ENCODE measurements at regions of chr12 and their contacts with region 1.

Region 1: DNA sequence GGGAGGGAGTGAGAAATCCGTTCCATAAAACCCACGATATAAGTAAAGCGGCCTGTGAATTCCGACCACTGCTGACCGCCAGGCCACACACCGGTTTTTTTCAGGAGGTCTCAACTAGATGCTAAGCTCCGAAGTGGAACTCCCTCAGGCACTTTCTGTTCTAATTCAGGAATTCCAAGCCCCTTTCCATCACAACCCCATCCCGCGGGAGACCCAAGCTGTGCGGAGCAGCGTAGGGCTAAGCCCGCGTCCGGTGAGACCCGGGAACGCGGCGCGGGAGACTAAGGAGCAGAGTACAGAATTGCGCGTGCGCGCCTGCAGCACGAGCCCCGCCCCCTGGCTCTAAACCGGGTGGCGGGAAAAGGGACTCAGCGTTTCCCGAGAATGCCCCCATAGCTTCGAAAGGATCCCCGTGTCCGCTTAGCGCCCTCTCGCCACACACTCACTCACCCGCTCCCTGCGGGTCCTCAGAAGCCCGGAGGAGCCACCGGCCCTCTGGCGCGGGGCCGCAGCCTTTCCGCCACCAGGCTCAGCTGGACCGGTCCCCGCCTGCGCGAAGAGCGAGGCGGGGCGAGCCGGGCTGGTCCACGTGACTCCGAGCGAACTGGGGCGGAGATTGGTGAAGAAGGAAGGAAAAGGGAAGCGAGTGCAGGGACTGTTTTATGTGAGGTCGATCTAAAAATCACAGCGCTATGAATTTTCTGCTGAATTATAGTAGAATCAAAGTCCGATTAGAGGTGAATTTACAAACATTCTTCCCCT is at the start of gene TIMELESS:
- DNase-seq: peak; percentile 91
- ATAC-seq: peak; percentile 99
- H3K4me3 Mint-ChIP-seq: peak within 1 kb of the TSS; percentile 87
- H3K27ac Mint-ChIP-seq: peak within 1 kb of the TSS; percentile 82
- H3K4me1 Mint-ChIP-seq: peaks cover 31% of the 10 kb centered on the region
- H3K27me3 Mint-ChIP-seq: no peaks in the 10 kb centered on the region
- total RNA-seq, gene TIMELESS: 64.1 to 65.8 TPM

Region 2: DNA sequence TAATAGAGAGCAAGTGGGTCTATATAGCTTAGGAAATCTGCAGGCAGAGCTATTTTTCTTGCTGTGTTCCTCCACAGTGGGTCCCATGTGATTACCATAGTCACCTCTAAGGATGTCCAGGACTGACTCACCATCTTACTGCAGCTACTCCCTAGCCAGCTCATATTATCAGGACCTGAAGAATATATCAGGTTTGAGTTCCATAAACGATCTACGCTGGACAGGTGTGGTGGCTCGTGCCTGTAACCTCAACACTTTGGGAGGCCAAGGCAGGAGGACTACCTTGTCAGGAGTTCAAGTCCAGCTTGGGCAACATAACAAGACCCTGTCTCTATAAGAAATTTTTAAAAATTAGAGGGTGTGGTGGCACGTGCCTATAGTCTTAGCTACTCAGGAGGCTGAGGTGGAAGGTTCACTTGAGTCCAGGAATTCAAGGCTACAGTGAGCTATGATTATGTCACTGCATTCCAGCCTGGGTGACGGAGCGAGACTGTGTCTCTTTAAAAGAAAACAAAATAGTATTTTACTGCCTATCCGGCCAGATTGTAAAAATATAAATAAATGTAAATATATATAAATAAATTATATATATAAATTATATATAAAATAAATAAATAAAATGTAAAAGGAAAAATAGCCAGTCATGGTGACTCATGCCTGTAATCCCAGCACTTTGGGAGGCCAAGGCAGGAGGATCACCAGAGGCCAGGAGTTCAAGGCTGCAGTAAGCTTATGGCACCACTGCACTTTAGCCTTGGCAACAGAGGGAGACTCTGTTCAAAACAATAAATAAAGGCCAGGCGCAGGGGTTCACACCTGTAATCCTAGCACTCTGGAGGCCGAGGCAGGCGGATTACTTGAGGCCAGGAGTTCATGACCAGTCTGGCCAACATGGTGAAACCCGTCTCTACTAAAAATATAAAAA is 12.5 kb after region 1 on chr12:
- CTCF ChIA-PET with region 1: interaction called, 36 read pairs
- DNase-seq: no peak
- ATAC-seq: no peak
- H3K4me3 Mint-ChIP-seq: no peak overlapping the region
- H3K27ac Mint-ChIP-seq: no peak overlapping the region
- H3K4me1 Mint-ChIP-seq: peaks cover 5% of the 10 kb centered on the region
- H3K27me3 Mint-ChIP-seq: no peaks in the 10 kb centered on the region

Region 3: GRCh38 chr12:56468216-56469006 is 19.4 kb after region 1 on chr12 and contains the start of gene SPRYD4:
- CTCF ChIA-PET with region 1: interaction called, 36 read pairs
- DNase-seq: peak; percentile 95
- ATAC-seq: peak; percentile 96
- H3K4me3 Mint-ChIP-seq: peak within 1 kb of the TSS; percentile 97
- H3K27ac Mint-ChIP-seq: peak within 1 kb of the TSS; percentile 95
- H3K4me1 Mint-ChIP-seq: peaks cover 29% of the 10 kb centered on the region
- H3K27me3 Mint-ChIP-seq: no peaks in the 10 kb centered on the region
- total RNA-seq, gene SPRYD4: 3.4 to 3.7 TPM

Region 4: DNA sequence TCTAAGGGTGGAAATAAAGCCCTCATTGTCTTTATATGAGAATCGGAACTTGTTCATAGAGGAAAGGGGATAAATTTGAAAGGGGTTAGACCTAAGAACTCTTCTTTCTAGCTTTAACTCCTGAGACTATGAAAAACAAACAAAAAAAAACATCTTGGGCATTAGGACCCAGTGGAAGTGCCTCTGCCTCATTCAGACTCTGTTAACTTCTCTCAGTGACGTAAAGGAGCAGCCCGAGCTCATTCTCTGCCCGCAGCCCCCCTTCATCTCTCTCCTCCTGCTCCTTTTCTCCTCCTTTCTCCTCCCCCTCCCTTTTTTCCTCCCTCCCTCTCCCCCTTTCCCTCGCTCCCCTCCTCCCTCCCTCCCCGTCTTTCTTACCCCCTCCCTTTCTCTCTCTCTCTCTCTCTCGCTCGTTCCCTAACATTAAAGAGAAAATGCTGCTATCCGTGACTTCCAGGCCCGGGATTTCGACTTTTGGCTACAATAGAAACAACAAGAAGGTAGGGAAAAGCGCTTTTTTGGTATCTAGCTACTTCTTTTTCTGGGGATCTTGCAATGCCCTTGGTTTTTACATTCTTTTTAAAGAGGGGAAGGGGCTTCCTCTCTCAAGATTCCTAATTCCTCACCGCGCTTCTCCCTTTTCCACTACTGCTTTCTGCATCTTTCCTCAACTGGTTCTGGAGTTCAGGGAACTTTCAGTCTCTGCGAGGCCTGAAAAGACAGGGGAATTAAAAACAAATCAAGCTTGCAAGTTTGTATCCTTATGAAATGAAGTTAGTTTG is 72.7 kb after region 1 on chr12 and contains the start of gene RBMS2:
- CTCF ChIA-PET with region 1: no interaction called
- DNase-seq: peak; percentile 71
- ATAC-seq: peak; percentile 93
- H3K4me3 Mint-ChIP-seq: peak within 1 kb of the TSS; percentile 77
- H3K27ac Mint-ChIP-seq: peak within 1 kb of the TSS; percentile 77
- H3K4me1 Mint-ChIP-seq: peaks cover 34% of the 10 kb centered on the region
- H3K27me3 Mint-ChIP-seq: no peaks in the 10 kb centered on the region
- total RNA-seq, gene RBMS2: 9.3 to 10.0 TPM

Measured in activated CD8-positive, alpha-beta memory T cell treated with anti-CD3 and anti-CD28 coated beads, Interleukin-2, amount 10 ng/mL, durations not matched to agents 7 days and 5 days (primary cell).